H1 (cell line): ENCODE measurements at regions of chr10 and their contacts with region 1.

Region 1: GRCh38 chr10:63157845-63158624 is 24.9 kb downstream of the NRBF2 start:
- DNase-seq: peak in 1 of 2 experiments; percentile 57
- H3K4me3 ChIP-seq: no peak overlapping the region
- H3K27ac ChIP-seq: no peak overlapping the region
- H3K4me1 ChIP-seq: peaks cover 0 to 4% (median 0%) of the 10 kb centered on the region in 4 experiments; a peak in 1 of 7 replicates
- H3K27me3 ChIP-seq: no peaks in the 10 kb centered on the region
- CTCF ChIP-seq: peak in 2 of 3 experiments; percentile 76 to 82; a peak in 3 of 4 replicates
- EP300 ChIP-seq: no peak
- POLR2A ChIP-seq: no peak
- RAD21 ChIP-seq: peak; percentile 96 to 97

Region 2: DNA sequence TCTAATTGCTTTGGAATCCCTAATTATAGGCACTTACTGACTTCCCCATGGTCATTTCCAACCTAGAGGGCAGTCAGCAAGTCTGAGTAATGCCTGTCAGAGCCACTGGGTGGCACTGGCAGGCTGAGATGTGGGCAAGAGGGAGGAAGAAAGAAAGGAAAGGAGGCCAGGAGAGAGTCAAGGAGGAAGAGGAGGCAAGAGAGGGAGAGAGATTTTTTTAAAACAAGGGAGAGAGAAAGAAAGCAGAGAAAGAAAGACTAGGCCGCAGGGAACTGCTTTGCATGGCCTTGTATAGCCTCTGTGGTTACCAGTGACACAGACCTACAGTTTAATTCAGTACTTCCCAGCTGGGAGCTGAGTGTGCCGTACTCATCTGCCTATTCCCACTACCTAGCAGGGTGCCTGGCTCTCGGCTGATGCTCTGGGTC is 563.9 kb before region 1 on chr10:
- CTCF ChIA-PET with region 1: interaction called, 22 read pairs
- POLR2A ChIA-PET with region 1: no interaction called
- DNase-seq: peak; percentile 43 to 74
- H3K4me3 ChIP-seq: no peak overlapping the region
- H3K27ac ChIP-seq: no peak overlapping the region
- H3K4me1 ChIP-seq: peaks cover 0 to 2% (median 0%) of the 10 kb centered on the region in 4 experiments; a peak in 1 of 7 replicates
- H3K27me3 ChIP-seq: no peaks in the 10 kb centered on the region
- CTCF ChIP-seq: peak; percentile 83 to 93 (median 87)
- EP300 ChIP-seq: no peak
- POLR2A ChIP-seq: no peak
- RAD21 ChIP-seq: peak; percentile 96 to 97

Region 3: GRCh38 chr10:62610649-62611229 is 547.3 kb before region 1 on chr10:
- CTCF ChIA-PET with region 1: interaction called, 20 read pairs
- POLR2A ChIA-PET with region 1: no interaction called
- DNase-seq: peak; percentile 47 to 83
- H3K4me3 ChIP-seq: no peak overlapping the region
- H3K27ac ChIP-seq: no peak overlapping the region
- H3K4me1 ChIP-seq: no peaks in the 10 kb centered on the region
- H3K27me3 ChIP-seq: no peaks in the 10 kb centered on the region; a peak in 1 of 7 replicates
- CTCF ChIP-seq: peak; percentile 88 to 97 (median 94)
- EP300 ChIP-seq: no peak
- POLR2A ChIP-seq: no peak
- RAD21 ChIP-seq: peak; percentile 98 to 99

Region 4: DNA sequence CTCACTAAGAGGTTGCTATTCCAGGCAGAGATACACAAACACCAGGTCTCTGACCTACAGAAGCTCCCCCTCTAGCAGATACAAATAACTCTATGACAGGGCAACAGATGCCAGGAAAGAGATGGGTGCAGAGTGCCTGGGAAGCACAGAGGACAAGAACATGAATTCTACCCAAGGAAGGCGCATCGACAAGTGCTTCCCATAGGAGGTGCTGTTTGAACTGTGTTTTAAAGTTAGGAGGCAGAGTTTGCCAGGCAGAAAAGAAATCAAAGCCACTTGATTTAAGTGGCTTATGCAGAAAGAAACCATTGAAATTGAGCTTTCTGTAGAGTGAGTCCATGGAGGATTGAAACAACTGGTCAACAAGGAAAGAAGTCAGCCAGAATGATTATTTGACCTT is 306.6 kb before region 1 on chr10:
- CTCF ChIA-PET with region 1: interaction called, 23 read pairs
- POLR2A ChIA-PET with region 1: no interaction called
- DNase-seq: peak in 1 of 2 experiments; percentile 65
- H3K4me3 ChIP-seq: no peak overlapping the region
- H3K27ac ChIP-seq: no peak overlapping the region
- H3K4me1 ChIP-seq: no peaks in the 10 kb centered on the region
- H3K27me3 ChIP-seq: no peaks in the 10 kb centered on the region
- CTCF ChIP-seq: peak; percentile 13 to 87 (median 58)
- EP300 ChIP-seq: no peak
- POLR2A ChIP-seq: no peak
- RAD21 ChIP-seq: peak; percentile 78 to 79

Region 5: GRCh38 chr10:63083904-63084689 is 73.9 kb before region 1 on chr10:
- CTCF ChIA-PET with region 1: interaction called, 19 read pairs
- POLR2A ChIA-PET with region 1: no interaction called
- DNase-seq: peak in 1 of 2 experiments; percentile 19
- H3K4me3 ChIP-seq: no peak overlapping the region
- H3K27ac ChIP-seq: no peak overlapping the region
- H3K4me1 ChIP-seq: no peaks in the 10 kb centered on the region
- H3K27me3 ChIP-seq: no peaks in the 10 kb centered on the region
- CTCF ChIP-seq: peak in 2 of 3 experiments; percentile 74 to 75; a peak in 3 of 4 replicates
- EP300 ChIP-seq: no peak
- POLR2A ChIP-seq: no peak
- RAD21 ChIP-seq: peak; percentile 92 to 94

Region 6: DNA sequence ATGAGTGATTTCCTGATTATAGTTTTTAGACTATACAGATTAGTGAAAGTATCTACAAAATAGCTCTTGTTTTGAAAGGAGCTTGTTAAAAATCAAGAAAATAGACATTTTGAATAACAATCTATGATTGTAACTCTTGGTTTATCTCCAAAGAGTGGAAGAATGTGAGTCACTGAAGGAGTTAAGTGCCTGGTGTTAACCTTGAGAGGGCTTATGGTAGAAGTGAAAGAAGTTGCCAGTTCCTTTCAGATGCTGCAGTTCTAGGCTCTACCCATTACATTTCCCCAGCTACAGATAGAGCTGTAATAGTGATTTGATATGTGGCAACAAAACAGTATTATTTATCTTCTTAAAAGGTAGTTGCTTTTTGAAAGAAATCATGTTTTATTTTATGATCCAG is 12.3 kb before region 1 on chr10:
- CTCF ChIA-PET with region 1: interaction called, 31 read pairs
- POLR2A ChIA-PET with region 1: interaction called, 3 read pairs
- DNase-seq: no peak
- H3K4me3 ChIP-seq: no peak overlapping the region
- H3K27ac ChIP-seq: no peak overlapping the region
- H3K4me1 ChIP-seq: no peaks in the 10 kb centered on the region; a peak in 1 of 7 replicates
- H3K27me3 ChIP-seq: no peaks in the 10 kb centered on the region
- CTCF ChIP-seq: no peak
- EP300 ChIP-seq: no peak
- POLR2A ChIP-seq: no peak
- RAD21 ChIP-seq: no peak